BJ (cell line): ENCODE measurements at regions of chr10 and their contacts with region 1.

Region 1: DNA sequence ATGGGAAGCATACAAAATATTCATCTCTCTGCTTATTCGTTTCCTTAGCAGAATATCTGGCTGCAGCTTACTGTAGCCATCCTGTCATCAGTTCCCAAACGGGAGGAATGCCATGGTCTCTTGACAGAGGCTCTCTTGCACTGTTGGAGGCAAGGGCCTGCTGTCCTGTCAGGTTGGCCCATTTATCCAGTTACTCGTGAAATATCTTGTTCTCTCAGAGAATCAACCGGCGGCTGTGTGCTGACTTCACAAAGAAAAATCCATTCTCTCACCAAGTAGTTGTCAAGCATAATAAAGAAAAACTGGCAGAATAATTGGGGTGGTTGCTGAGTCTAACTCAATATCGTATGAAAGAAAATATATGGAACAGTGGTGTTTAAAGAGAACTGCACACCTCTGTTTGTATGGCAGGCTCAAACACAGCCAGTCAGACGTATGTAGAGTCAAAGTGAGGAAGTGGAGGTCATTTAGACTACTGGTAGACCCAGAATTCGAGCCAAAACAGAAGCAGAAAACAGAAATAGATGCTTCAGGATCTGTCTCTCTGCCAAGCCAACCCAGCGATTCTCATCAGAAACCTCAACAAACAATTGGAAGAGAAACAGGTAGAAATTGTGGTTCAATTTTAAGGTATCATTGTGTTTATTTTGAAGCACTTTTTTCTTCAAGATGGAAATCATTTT is 349.2 kb upstream of the PRKCQ start:
- DNase-seq: no peak
- H3K4me3 ChIP-seq: no peak overlapping the region
- H3K27me3 ChIP-seq: no peaks in the 10 kb centered on the region
- CTCF ChIP-seq: no peak

Region 2: DNA sequence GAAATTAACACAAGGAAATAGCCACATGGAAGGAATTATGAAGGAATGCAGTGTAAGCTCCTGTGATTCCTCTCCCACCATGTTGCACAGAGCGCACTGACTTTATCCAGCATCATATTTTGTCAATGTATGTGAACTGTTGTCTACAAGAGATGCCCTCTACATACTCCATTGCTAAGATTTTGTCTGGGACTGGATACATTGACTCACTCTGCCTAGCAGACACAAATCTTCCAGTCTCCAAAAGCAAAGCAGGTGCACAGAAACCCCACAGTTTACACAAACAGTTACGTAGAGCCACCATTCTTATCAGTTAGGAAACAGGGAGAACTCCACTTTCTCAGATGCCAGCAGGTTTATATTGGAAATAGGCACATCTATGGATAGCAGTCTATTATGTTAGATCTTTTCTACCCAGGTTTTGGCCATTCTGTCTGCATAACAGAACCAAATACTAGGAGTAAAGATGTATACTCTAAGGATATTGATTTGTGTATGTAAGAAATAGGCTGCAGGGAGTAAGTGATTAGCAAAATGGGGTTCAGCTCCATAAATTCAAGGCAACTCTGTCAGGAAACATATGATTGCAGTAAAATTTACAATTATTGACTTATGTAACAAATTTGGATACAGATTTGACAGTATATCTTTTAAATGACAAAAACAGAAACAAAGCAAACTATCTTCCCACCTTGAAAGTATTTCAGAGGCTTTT is 1927.1 kb before region 1 on chr10:
- CTCF ChIA-PET with region 1: no interaction called
- POLR2A ChIA-PET with region 1: no interaction called
- DNase-seq: no peak
- H3K4me3 ChIP-seq: no peak overlapping the region
- H3K27me3 ChIP-seq: no peaks in the 10 kb centered on the region; the same call in 1 of the 2 replicates
- CTCF ChIP-seq: no peak

Region 3: DNA sequence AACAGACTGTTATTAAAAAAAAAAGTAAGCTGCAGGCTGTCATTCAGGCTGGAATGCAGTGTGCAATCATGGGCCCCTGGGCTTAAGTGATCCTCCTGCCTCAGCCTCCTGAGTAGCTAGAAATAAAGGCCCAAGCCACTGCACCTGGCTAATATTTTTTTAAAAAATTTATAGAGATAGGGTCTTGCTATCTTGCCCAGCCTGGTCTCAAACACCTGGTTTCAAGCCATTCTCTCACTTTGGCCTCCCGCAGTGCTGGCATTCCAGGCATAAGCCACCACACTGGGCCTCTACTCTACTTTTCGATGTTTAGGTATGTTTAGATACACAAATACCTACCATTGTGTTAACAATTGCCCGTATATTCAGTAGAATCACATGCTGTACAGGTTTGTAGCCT is 78.8 kb before region 1 on chr10:
- CTCF ChIA-PET with region 1: no interaction called
- POLR2A ChIA-PET with region 1: no interaction called
- DNase-seq: no peak
- H3K4me3 ChIP-seq: no peak overlapping the region
- H3K27me3 ChIP-seq: no peaks in the 10 kb centered on the region
- CTCF ChIP-seq: no peak

Region 4: GRCh38 chr10:6973899-6974298 is 44.6 kb after region 1 on chr10:
- CTCF ChIA-PET with region 1: no interaction called
- POLR2A ChIA-PET with region 1: no interaction called
- DNase-seq: no peak
- H3K4me3 ChIP-seq: no peak overlapping the region
- H3K27me3 ChIP-seq: no peaks in the 10 kb centered on the region
- CTCF ChIP-seq: no peak

Region 5: GRCh38 chr10:6995831-6996230 is 66.5 kb after region 1 on chr10:
- CTCF ChIA-PET with region 1: no interaction called
- POLR2A ChIA-PET with region 1: interaction called, 11 read pairs
- DNase-seq: no peak
- H3K4me3 ChIP-seq: no peak overlapping the region
- H3K27me3 ChIP-seq: no peaks in the 10 kb centered on the region
- CTCF ChIP-seq: no peak